ENCODE measurements at regions of chr19 and their contacts with region 1.

Region 1: DNA sequence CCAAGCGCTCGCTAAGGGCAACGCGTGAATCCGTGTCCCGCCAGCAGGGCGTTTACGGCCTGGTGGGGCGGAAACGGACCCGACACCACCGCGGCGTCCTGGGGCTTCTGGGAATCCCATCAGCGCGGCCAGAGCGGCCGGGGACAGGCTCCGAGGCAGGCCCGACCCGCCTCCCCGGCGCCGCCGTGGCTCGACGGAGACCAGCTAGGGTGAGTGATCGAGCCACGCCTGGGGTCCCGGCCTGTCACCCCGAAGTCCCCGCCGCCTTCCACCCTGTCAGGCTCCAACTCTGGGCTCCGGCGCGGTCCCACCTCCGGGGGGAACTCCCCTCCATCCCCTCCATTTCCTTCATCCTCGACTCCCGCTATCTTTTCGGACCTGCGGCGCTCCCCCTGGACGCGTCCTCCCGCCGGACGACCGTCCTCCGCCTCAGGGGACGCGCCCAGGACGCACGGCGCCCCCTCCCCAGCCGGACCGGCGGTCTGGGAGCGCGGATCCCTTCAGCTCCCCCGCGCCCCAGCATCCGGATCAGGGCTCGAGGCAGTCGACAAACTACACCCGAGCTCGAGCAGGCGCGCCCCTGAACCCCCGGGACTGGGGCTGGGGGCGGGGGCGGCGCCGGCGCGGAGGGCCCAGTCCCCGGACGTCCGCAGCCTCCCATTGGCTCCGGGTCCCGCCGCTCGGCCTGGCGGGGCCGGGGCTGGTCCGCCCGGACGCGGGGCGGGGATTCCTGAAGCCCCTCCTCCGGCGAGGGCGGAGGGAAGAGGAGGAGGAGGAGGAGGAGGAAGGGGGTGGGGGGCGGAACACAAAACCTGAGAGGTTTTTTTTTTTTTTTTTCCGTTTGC is 638 bp upstream of the BICRA start:
- DNase-seq: peak; percentile 84 to 89 (median 88)
- H3K4me3 ChIP-seq: peak overlapping the region; percentile 87 to 97 (median 96)
- H3K4me3 Mint-ChIP-seq: peak overlapping the region; percentile 74 to 85
- H3K27ac ChIP-seq: peak overlapping the region; percentile 73 to 93
- H3K27ac Mint-ChIP-seq: peak overlapping the region; percentile 73 to 91 (median 79)
- H3K4me1 ChIP-seq: peaks cover 23 to 28% of the 10 kb centered on the region in 2 donors
- H3K4me1 Mint-ChIP-seq: peaks cover 38% of the 10 kb centered on the region
- H3K27me3 ChIP-seq: no peaks in the 10 kb centered on the region
- H3K27me3 Mint-ChIP-seq: peaks cover 0 to 14% (median 10%) of the 10 kb centered on the region in 3 donors
- CTCF ChIP-seq: peak; percentile 38

Region 2: DNA sequence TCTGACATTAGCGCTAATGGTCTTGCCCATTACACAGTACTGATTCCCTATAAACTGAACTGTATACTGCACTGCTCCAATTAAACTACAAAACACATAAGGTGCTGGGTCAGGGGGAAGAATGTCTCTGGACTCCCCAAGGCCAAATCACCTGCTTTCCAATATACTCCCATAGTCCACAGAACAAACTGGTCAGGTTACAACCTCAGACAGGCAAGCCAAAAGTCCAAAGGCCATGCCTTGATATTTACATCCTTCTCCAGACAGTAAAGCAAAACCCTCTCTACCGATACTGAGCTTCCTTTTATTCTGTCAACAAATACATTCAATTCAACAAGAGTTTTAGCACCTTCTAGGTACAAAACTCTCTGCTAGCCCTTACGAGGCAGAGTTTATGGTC is 44.2 kb before region 1 on chr19:
- intact Hi-C with region 1: no loop called
- DNase-seq: no peak
- H3K4me3 ChIP-seq: no peak overlapping the region
- H3K4me3 Mint-ChIP-seq: no peak overlapping the region
- H3K27ac ChIP-seq: no peak overlapping the region
- H3K27ac Mint-ChIP-seq: no peak overlapping the region
- H3K4me1 ChIP-seq: no peaks in the 10 kb centered on the region
- H3K4me1 Mint-ChIP-seq: no peaks in the 10 kb centered on the region
- H3K27me3 ChIP-seq: no peaks in the 10 kb centered on the region
- H3K27me3 Mint-ChIP-seq: peaks cover 8 to 13% (median 9%) of the 10 kb centered on the region in 3 donors
- CTCF ChIP-seq: no peak

Region 3: GRCh38 chr19:47582320-47582909 is 25.9 kb before region 1 on chr19:
- intact Hi-C with region 1: no loop called
- DNase-seq: no peak
- H3K4me3 ChIP-seq: no peak overlapping the region
- H3K4me3 Mint-ChIP-seq: peak overlapping the region in 1 of 2 donors; percentile 22
- H3K27ac ChIP-seq: no peak overlapping the region
- H3K27ac Mint-ChIP-seq: no peak overlapping the region
- H3K4me1 ChIP-seq: no peaks in the 10 kb centered on the region
- H3K4me1 Mint-ChIP-seq: peaks cover 6% of the 10 kb centered on the region
- H3K27me3 ChIP-seq: peaks cover 0 to 6% of the 10 kb centered on the region in 2 donors
- H3K27me3 Mint-ChIP-seq: peaks cover 15 to 30% (median 17%) of the 10 kb centered on the region in 3 donors
- CTCF ChIP-seq: no peak

Region 4: GRCh38 chr19:47663841-47664771 is 55.8 kb after region 1 on chr19:
- intact Hi-C with region 1: loop called (anchors 5 kb)
- DNase-seq: peak; percentile 62 to 77 (median 68)
- H3K4me3 ChIP-seq: peak overlapping the region in 1 of 3 experiments; percentile 51
- H3K4me3 Mint-ChIP-seq: peak overlapping the region; percentile 39 to 81
- H3K27ac ChIP-seq: peak overlapping the region; percentile 74 to 78
- H3K27ac Mint-ChIP-seq: peak overlapping the region; percentile 86 to 96 (median 94)
- H3K4me1 ChIP-seq: peaks cover 50 to 51% of the 10 kb centered on the region in 2 donors
- H3K4me1 Mint-ChIP-seq: peaks cover 55% of the 10 kb centered on the region
- H3K27me3 ChIP-seq: no peaks in the 10 kb centered on the region
- H3K27me3 Mint-ChIP-seq: peaks cover 0 to 2% (median 0%) of the 10 kb centered on the region in 3 donors
- CTCF ChIP-seq: no peak

Measured in CD14-positive monocyte (primary cell).